ENCODE measurements at regions of chr20 and their contacts with region 1.

Region 1: DNA sequence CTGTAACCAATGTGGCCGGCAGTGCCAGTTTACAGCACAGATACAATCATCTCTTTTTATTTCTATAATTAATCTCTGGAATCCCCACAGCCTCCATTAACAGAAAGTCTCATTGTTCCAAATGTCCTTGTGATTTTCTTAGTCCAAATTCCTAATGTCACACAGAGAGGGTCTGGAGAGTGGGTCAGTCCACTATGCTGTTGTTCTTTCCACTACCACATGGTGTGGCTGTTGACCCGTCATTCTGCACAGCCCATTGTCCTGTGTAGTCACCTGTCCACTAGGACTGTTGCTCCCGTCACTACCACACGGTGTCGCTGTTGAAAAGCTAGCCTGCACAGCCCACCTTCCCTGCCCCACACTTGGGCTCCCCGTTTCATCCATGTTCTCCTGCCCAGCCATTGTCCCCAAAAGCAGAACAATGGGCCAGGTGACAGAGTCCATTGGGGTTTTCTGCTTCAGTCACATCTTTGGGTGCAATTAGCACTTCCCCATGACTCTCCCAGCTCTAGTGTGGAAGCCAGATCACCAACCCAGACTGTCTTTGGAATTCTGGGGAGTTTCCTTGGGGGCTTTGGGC is 8.6 kb upstream of the LBP start:
- DNase-seq: no peak
- ATAC-seq: peak; percentile 68; the same call in 1 of the 2 replicates
- H3K4me3 ChIP-seq: no peak overlapping the region
- H3K27ac ChIP-seq: no peak overlapping the region
- H3K4me1 ChIP-seq: no peaks in the 10 kb centered on the region
- H3K27me3 ChIP-seq: no peaks in the 10 kb centered on the region; the same call in none of the 2 replicates
- CTCF ChIP-seq: peak; percentile 72

Region 2: DNA sequence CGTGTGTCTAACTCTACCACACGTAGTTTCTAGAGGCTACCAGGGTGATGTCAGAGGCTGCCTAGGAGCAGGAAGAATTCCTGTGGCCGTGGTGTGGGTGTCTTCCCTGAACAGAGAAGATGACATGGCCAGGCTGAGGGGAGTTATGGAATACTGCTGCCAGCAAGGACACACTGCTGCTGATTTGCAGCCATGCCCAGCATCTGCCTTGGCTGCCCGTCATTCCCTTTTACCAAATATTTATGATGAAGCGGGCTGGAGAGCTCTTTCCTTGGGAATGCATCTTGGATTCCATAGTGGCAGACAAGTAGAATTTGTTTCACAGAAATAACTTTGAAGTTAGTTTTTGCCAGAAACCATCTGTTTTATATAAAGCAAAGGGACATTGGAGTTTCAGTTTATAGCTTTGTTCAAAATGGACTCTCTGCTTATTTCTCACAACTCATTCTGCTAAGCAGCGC is 515.5 kb before region 1 on chr20:
- CTCF ChIA-PET with region 1: no interaction called
- POLR2A ChIA-PET with region 1: no interaction called
- in situ Hi-C with region 1: no loop called
- intact Hi-C with region 1: no loop called
- DNase-seq: no peak
- ATAC-seq: no peak
- H3K4me3 ChIP-seq: no peak overlapping the region
- H3K27ac ChIP-seq: no peak overlapping the region
- H3K4me1 ChIP-seq: no peaks in the 10 kb centered on the region
- H3K27me3 ChIP-seq: no peaks in the 10 kb centered on the region
- CTCF ChIP-seq: no peak

Region 3: GRCh38 chr20:38298705-38299288 is 38.9 kb before region 1 on chr20:
- CTCF ChIA-PET with region 1: interaction called, 13 read pairs
- POLR2A ChIA-PET with region 1: no interaction called
- in situ Hi-C with region 1: no loop called
- intact Hi-C with region 1: no loop called
- DNase-seq: no peak
- ATAC-seq: no peak; the same call in 1 of the 2 replicates
- H3K4me3 ChIP-seq: no peak overlapping the region
- H3K27ac ChIP-seq: no peak overlapping the region
- H3K4me1 ChIP-seq: no peaks in the 10 kb centered on the region
- H3K27me3 ChIP-seq: no peaks in the 10 kb centered on the region
- CTCF ChIP-seq: no peak

Region 4: DNA sequence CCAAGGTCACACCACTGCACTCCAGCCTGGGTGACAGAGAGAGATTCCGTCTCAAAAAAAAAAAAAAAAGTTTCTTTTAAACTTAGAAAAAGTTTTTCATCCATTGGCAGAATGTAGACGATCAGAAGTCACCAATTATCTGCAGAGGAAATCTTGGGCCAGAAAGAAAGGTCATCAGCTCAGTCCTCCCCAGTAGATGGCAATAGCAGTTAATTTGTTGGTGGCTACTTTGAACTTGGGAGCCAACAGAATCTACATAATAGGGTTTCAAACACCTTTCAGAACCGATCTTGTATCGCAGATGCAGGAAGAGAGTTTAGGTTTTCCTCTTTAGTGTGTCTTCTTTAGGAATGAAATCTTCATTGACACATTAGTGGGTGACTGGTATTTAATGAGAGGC is 50.3 kb after region 1 on chr20:
- CTCF ChIA-PET with region 1: no interaction called
- POLR2A ChIA-PET with region 1: no interaction called
- in situ Hi-C with region 1: no loop called
- intact Hi-C with region 1: no loop called
- DNase-seq: no peak
- ATAC-seq: no peak
- H3K4me3 ChIP-seq: no peak overlapping the region
- H3K27ac ChIP-seq: no peak overlapping the region
- H3K4me1 ChIP-seq: no peaks in the 10 kb centered on the region
- H3K27me3 ChIP-seq: peaks cover 2% of the 10 kb centered on the region
- CTCF ChIP-seq: peak; percentile 42

Region 5: GRCh38 chr20:38412877-38413577 is 75.4 kb after region 1 on chr20:
- CTCF ChIA-PET with region 1: interaction called, 11 read pairs
- POLR2A ChIA-PET with region 1: no interaction called
- in situ Hi-C with region 1: no loop called
- intact Hi-C with region 1: loop called (anchors 2 kb)
- DNase-seq: no peak
- ATAC-seq: no peak
- H3K4me3 ChIP-seq: no peak overlapping the region
- H3K27ac ChIP-seq: no peak overlapping the region
- H3K4me1 ChIP-seq: no peaks in the 10 kb centered on the region
- H3K27me3 ChIP-seq: no peaks in the 10 kb centered on the region
- CTCF ChIP-seq: no peak

Region 6: GRCh38 chr20:38825901-38826625 is 488.4 kb after region 1 on chr20:
- CTCF ChIA-PET with region 1: no interaction called
- POLR2A ChIA-PET with region 1: no interaction called
- in situ Hi-C with region 1: no loop called
- intact Hi-C with region 1: no loop called
- DNase-seq: no peak
- ATAC-seq: no peak
- H3K4me3 ChIP-seq: no peak overlapping the region
- H3K27ac ChIP-seq: no peak overlapping the region
- H3K4me1 ChIP-seq: no peaks in the 10 kb centered on the region
- H3K27me3 ChIP-seq: peaks cover 11% of the 10 kb centered on the region; the same call in 1 of the 2 replicates
- CTCF ChIP-seq: no peak